ENCODE measurements at regions of chr17 and their contacts with region 1.

Region 1: GRCh38 chr17:10618202-10618635 is 38.9 kb downstream of the MYH3 start:
- DNase-seq: peak; percentile 73
- H3K4me3 Mint-ChIP-seq: no peak overlapping the region
- H3K27ac Mint-ChIP-seq: no peak overlapping the region
- H3K4me1 Mint-ChIP-seq: no peaks in the 10 kb centered on the region
- H3K27me3 Mint-ChIP-seq: peaks cover 4% of the 10 kb centered on the region

Region 2: GRCh38 chr17:9924735-9925191 is 693.5 kb before region 1 on chr17:
- CTCF ChIA-PET with region 1: interaction called, 8 read pairs
- intact Hi-C with region 1: loop called (anchors 1 kb)
- DNase-seq: peak; percentile 23
- H3K4me3 Mint-ChIP-seq: no peak overlapping the region
- H3K27ac Mint-ChIP-seq: no peak overlapping the region
- H3K4me1 Mint-ChIP-seq: peaks cover 2% of the 10 kb centered on the region
- H3K27me3 Mint-ChIP-seq: no peaks in the 10 kb centered on the region

Region 3: DNA sequence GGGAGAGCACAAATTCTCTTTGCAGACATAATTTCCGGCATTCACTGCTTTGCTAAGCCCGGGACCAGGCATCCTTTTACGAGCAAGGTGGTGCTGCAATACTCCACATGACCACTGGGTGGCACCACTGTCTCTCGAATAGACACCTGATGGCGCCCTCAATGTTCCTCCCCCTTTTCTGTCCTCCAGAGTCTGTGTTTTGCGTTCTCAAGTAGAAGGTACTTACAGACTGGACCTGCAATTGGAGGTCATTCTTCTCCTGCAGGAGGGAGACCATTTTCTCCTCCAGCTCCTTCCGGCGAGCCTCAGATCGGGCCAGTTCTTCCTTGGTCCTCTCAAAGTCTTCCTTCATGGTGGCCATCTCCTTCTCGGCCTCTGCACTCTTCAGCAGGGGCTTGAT is 290.6 kb before region 1 on chr17:
- CTCF ChIA-PET with region 1: interaction called, 40 read pairs
- intact Hi-C with region 1: loop called (anchors 1 kb)
- DNase-seq: peak; percentile 83
- H3K4me3 Mint-ChIP-seq: no peak overlapping the region
- H3K27ac Mint-ChIP-seq: no peak overlapping the region
- H3K4me1 Mint-ChIP-seq: no peaks in the 10 kb centered on the region
- H3K27me3 Mint-ChIP-seq: peaks cover 3% of the 10 kb centered on the region

Region 4: GRCh38 chr17:10631048-10631700 is 13.0 kb after region 1 on chr17:
- CTCF ChIA-PET with region 1: interaction called, 98 read pairs
- intact Hi-C with region 1: no loop called
- DNase-seq: peak; percentile 40
- H3K4me3 Mint-ChIP-seq: no peak overlapping the region
- H3K27ac Mint-ChIP-seq: no peak overlapping the region
- H3K4me1 Mint-ChIP-seq: no peaks in the 10 kb centered on the region
- H3K27me3 Mint-ChIP-seq: no peaks in the 10 kb centered on the region